ENCODE measurements at regions of chr6 and their contacts with region 1.

Region 1: DNA sequence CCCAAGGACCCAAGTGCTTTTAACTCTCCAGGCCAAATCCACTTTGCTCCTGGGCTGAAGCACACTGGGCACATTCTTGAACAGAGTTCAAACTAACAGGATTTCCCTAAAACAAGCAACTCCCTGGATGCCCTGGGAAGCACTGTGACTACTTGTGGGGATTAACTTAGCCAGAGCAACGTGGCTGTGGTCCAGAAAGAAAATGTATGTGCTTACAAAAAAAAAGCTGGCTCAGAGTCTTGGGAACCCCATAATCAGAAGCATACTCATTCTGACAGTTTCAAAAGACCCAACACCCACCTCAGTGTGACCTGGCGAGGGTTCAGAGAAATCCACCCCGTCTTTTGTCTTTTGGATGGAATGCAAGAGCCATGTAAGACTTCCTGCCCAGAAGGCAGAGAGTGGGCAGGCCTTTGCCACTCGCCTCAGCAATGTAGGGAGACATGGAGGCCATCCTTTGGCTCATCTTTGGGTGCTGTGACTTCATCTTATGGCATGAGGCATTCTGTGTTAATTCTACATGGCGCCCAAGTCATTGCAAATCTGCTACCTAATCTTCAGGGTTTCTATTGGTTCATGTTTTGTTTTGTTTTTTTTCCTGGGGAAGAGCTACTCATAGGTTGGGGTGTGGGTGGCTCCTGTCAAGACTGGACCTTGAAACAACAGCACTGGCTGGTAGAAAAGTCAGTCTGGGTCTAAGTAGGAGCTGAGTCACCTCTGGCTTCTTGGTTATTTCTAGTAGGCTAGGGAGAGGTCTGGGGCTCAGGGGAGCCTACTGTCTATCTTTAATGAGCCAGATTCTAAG is 248.6 kb upstream of the SUPT3H start:
- DNase-seq: no peak

Region 2: GRCh38 chr6:45677381-45678284 is 51.3 kb after region 1 on chr6:
- intact Hi-C with region 1: no loop called
- DNase-seq: no peak

Region 3: DNA sequence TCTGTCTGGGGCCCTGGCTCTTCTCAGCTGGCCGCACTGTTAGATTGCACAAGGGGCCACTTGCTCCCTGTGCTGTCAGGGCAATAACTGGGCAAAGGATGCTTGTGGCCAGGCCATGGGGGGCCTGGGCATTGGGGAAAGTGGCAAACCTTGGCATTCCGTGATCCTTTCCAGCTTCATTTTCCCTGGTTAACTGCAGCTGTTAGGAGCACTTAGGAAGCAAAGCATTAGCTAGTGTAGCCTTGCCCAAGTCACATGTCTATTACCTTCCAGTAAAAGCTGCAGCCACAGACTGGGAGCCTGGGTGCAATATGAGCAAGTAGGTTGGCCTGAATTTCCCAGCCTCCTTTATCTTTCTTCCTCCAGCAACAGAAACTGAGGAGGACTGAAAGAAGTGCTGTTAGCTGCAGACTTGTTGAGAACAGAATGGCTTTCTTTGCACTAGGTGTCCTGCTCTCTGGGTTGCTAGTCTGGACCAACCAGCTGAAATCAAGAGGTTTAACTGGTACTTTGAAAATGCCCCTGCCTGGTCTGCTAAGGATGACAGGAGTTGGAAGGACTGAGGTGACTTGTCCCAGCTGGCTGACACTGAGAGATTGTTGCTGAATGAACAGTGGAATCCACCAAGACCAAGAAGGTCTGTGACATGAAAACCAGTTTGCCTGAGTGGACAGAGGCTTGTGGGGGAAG is 63.8 kb after region 1 on chr6:
- intact Hi-C with region 1: loop called in 1 of 2 experiments (anchors 2 kb)
- DNase-seq: no peak